GM12878 (cell line): ENCODE measurements at regions of chr19 and their contacts with region 1.

Region 1: DNA sequence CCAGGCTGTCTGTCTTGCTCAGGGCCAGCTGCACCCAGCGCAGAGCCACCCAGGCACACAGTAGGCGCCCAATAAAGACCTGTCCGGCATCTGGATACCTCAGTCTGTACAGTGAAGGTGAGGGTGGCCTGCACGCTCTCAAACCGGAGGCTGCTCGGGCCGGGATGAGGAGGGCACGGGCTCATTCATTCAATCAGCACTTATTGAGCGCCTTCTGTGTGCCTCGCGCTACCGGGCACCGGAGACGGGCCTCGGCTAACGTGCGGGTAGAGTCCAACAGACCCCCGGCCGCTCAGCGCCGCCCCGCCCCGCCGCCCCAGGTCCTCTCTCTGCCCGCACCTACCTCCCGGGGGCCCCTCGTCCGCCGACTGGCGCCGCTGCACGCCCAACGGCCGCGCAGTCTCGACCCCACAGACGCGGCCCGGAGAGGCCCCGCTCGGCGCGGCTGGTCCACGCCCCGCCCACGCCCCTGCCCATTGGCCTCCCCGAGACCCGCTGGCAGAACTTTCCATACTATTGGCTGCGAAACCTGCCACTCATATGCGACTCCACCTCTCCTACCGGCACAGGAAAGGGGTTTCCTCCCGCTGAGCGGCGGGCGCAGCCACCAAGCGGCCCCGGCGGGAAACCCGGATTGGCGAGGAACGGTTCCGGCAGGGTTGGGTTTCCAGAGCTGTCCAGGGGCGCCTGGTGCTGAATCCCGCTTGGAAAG is at the start of gene SLC39A3:
- DNase-seq: peak; percentile 87
- ATAC-seq: peak; percentile 100
- H3K4me3 ChIP-seq: peak within 1 kb of the TSS; percentile 98
- H3K27ac ChIP-seq: peak within 1 kb of the TSS; percentile 67
- H3K4me1 ChIP-seq: no peaks in the 10 kb centered on the region
- H3K27me3 ChIP-seq: no peaks in the 10 kb centered on the region
- CTCF ChIP-seq: no peak
- EP300 ChIP-seq: no peak
- POLR2A ChIP-seq: peak; percentile 81
- RAD21 ChIP-seq: 0 out of 2 replicates have a peak, but pooled peaks have one; percentile 8
- polyA plus RNA-seq, gene SLC39A3: 0.63 to 1.1 TPM

Region 2: GRCh38 chr19:2461751-2462634 is 277.8 kb before region 1 on chr19:
- CTCF ChIA-PET with region 1: no interaction called
- POLR2A ChIA-PET with region 1: no interaction called
- RAD21 ChIA-PET with region 1: no interaction called
- SMC1A ChIA-PET with region 1: no interaction called
- in situ Hi-C with region 1: no loop called
- intact Hi-C with region 1: loop called (anchors 10 kb)
- DNase-seq: no peak
- ATAC-seq: peak; percentile 90
- H3K4me3 ChIP-seq: peak overlapping the region; percentile 88
- H3K27ac ChIP-seq: peak overlapping the region; percentile 68
- H3K4me1 ChIP-seq: no peaks in the 10 kb centered on the region
- H3K27me3 ChIP-seq: no peaks in the 10 kb centered on the region
- CTCF ChIP-seq: peak; percentile 10 to 45 (median 10); a peak in 3 of 6 replicates
- EP300 ChIP-seq: no peak
- POLR2A ChIP-seq: peak; percentile 62
- RAD21 ChIP-seq: no peak

Region 3: GRCh38 chr19:2663920-2664571 is 75.7 kb before region 1 on chr19:
- CTCF ChIA-PET with region 1: no interaction called
- POLR2A ChIA-PET with region 1: no interaction called
- RAD21 ChIA-PET with region 1: no interaction called
- SMC1A ChIA-PET with region 1: interaction called, 3 read pairs
- in situ Hi-C with region 1: no loop called
- intact Hi-C with region 1: loop called (anchors 5 kb)
- DNase-seq: no peak
- ATAC-seq: peak; percentile 92
- H3K4me3 ChIP-seq: no peak overlapping the region
- H3K27ac ChIP-seq: peak overlapping the region; percentile 47
- H3K4me1 ChIP-seq: peaks cover 23% of the 10 kb centered on the region
- H3K27me3 ChIP-seq: no peaks in the 10 kb centered on the region
- CTCF ChIP-seq: peak in 2 of 3 experiments; percentile 38 to 39; a peak in 3 of 6 replicates
- EP300 ChIP-seq: peak in 1 of 2 experiments; percentile 50; a peak in 1 of 4 replicates
- POLR2A ChIP-seq: no peak
- RAD21 ChIP-seq: peak; percentile 67

Region 4: GRCh38 chr19:2678043-2678671 is 61.6 kb before region 1 on chr19:
- CTCF ChIA-PET with region 1: no interaction called
- POLR2A ChIA-PET with region 1: no interaction called
- RAD21 ChIA-PET with region 1: no interaction called
- SMC1A ChIA-PET with region 1: no interaction called
- in situ Hi-C with region 1: no loop called
- intact Hi-C with region 1: no loop called
- DNase-seq: no peak
- ATAC-seq: peak; percentile 58
- H3K4me3 ChIP-seq: no peak overlapping the region; the same call in 1 of the 2 replicates
- H3K27ac ChIP-seq: peak overlapping the region; percentile 17; the same call in 1 of the 2 replicates
- H3K4me1 ChIP-seq: peaks cover 36% of the 10 kb centered on the region
- H3K27me3 ChIP-seq: no peaks in the 10 kb centered on the region
- CTCF ChIP-seq: no peak
- EP300 ChIP-seq: peak; percentile 57 to 100; a peak in 2 of 4 replicates
- POLR2A ChIP-seq: no peak
- RAD21 ChIP-seq: no peak